Dorsolateral prefrontal cortex (tissue), 120 donors: ENCODE measurements at regions of chr21 and their contacts with region 1.

Region 1: DNA sequence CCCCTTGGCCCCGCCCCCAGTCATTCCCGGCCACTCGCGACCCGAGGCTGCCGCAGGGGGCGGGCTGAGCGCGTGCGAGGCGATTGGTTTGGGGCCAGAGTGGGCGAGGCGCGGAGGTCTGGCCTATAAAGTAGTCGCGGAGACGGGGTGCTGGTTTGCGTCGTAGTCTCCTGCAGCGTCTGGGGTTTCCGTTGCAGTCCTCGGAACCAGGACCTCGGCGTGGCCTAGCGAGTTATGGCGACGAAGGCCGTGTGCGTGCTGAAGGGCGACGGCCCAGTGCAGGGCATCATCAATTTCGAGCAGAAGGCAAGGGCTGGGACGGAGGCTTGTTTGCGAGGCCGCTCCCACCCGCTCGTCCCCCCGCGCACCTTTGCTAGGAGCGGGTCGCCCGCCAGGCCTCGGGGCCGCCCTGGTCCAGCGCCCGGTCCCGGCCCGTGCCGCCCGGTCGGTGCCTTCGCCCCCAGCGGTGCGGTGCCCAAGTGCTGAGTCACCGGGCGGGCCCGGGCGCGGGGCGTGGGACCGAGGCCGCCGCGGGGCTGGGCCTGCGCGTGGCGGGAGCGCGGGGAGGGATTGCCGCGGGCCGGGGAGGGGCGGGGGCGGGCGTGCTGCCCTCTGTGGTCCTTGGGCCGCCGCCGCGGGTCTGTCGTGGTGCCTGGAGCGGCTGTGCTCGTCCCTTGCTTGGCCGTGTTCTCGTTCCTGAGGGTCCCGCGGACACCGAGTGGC is at the start of gene SOD1:
- DNase-seq: peak; percentile 93 to 98 (median 96)
- H3K4me3 ChIP-seq: peak within 1 kb of the TSS; percentile 68 to 98 (median 88)
- H3K27ac ChIP-seq: peak within 1 kb of the TSS; percentile 62 to 98 (median 94)
- H3K27me3 ChIP-seq: no peaks in the 10 kb centered on the region
- CTCF ChIP-seq: peak in 41 of 56 donors; percentile 4 to 63 (median 39)
- total RNA-seq, gene SOD1: 193 to 559 (median 431) TPM

Region 2: GRCh38 chr21:31731802-31732596 is 72.3 kb after region 1 on chr21 and contains the start of gene SCAF4:
- intact Hi-C with region 1: loop called (anchors 2 kb)
- DNase-seq: peak; percentile 81 to 95 (median 89)
- H3K4me3 ChIP-seq: peak within 1 kb of the TSS; percentile 65 to 99 (median 94)
- H3K27ac ChIP-seq: peak within 1 kb of the TSS; percentile 74 to 99 (median 95)
- H3K27me3 ChIP-seq: no peaks in the 10 kb centered on the region
- CTCF ChIP-seq: peak in 12 of 56 donors; percentile 4 to 23 (median 12)
- total RNA-seq, gene SCAF4: 26.2 to 45.8 (median 34.5) TPM

Region 3: GRCh38 chr21:31873696-31874599 is 214.3 kb after region 1 on chr21:
- intact Hi-C with region 1: loop called in 1 of 2 experiments (anchors 5 kb)
- DNase-seq: peak in 4 of 10 donors; percentile 28 to 56 (median 40)
- H3K4me3 ChIP-seq: peak overlapping the region; percentile 41 to 81 (median 67)
- H3K27ac ChIP-seq: peak overlapping the region in 43 of 59 donors; percentile 9 to 88 (median 65)
- H3K27me3 ChIP-seq: peaks cover 0 to 8% (median 0%) of the 10 kb centered on the region in 45 donors
- CTCF ChIP-seq: peak in 54 of 56 donors; percentile 18 to 75 (median 54)